MCF 10A (cell line): ENCODE measurements at regions of chr12 and their contacts with region 1.

Region 1: GRCh38 chr12:126369487-126370463 is 1304.5 kb downstream of the AACS start:
- DNase-seq: peak; percentile 56
- H3K4me3 Mint-ChIP-seq: peak overlapping the region; percentile 46
- H3K27ac Mint-ChIP-seq: peak overlapping the region; percentile 88
- H3K4me1 Mint-ChIP-seq: peaks cover 29% of the 10 kb centered on the region
- H3K27me3 Mint-ChIP-seq: no peaks in the 10 kb centered on the region
- CTCF ChIP-seq: peak; percentile 35

Region 2: GRCh38 chr12:126139355-126139754 is 230.4 kb before region 1 on chr12:
- CTCF ChIA-PET with region 1: no interaction called
- POLR2A ChIA-PET with region 1: no interaction called
- intact Hi-C with region 1: no loop called
- DNase-seq: no peak
- H3K4me3 Mint-ChIP-seq: no peak overlapping the region
- H3K27ac Mint-ChIP-seq: no peak overlapping the region
- H3K4me1 Mint-ChIP-seq: no peaks in the 10 kb centered on the region
- H3K27me3 Mint-ChIP-seq: no peaks in the 10 kb centered on the region
- CTCF ChIP-seq: no peak

Region 3: GRCh38 chr12:126233625-126234024 is 136.2 kb before region 1 on chr12:
- CTCF ChIA-PET with region 1: no interaction called
- POLR2A ChIA-PET with region 1: no interaction called
- intact Hi-C with region 1: no loop called
- DNase-seq: peak; percentile 36
- H3K4me3 Mint-ChIP-seq: no peak overlapping the region
- H3K27ac Mint-ChIP-seq: no peak overlapping the region
- H3K4me1 Mint-ChIP-seq: no peaks in the 10 kb centered on the region
- H3K27me3 Mint-ChIP-seq: no peaks in the 10 kb centered on the region
- CTCF ChIP-seq: no peak

Region 4: DNA sequence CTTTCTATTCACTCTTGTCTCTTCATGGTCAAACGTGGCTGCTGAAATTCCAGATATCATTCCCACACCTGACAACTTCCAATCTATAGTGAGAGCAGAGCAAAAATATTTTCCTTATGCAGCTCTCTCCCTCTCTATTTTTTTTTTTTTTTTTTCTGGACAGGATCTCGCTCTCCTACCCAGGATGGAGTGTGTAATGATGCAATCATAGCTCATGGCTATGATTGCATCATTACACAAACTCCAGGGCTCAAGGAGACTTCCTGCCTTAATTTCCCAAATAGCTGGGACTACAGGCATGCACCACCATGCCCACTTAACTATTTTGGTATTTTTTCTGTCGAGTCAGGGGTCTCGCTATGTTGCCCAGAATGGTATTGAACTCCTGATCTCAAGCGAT is 94.4 kb after region 1 on chr12:
- CTCF ChIA-PET with region 1: no interaction called
- POLR2A ChIA-PET with region 1: no interaction called
- intact Hi-C with region 1: loop called (anchors 10 kb)
- DNase-seq: peak; percentile 53
- H3K4me3 Mint-ChIP-seq: no peak overlapping the region
- H3K27ac Mint-ChIP-seq: no peak overlapping the region
- H3K4me1 Mint-ChIP-seq: peaks cover 13% of the 10 kb centered on the region
- H3K27me3 Mint-ChIP-seq: no peaks in the 10 kb centered on the region
- CTCF ChIP-seq: no peak